ENCODE measurements at regions of chr17 and their contacts with region 1.

Region 1: GRCh38 chr17:48074315-48075081 is 26.3 kb downstream of the NFE2L1 start:
- DNase-seq: peak; percentile 59
- H3K4me3 Mint-ChIP-seq: no peak overlapping the region
- H3K27ac Mint-ChIP-seq: no peak overlapping the region
- H3K4me1 Mint-ChIP-seq: no peaks in the 10 kb centered on the region
- H3K27me3 Mint-ChIP-seq: no peaks in the 10 kb centered on the region

Region 2: GRCh38 chr17:47949136-47949759 is 125.2 kb before region 1 on chr17:
- intact Hi-C with region 1: loop called (anchors 1 kb)
- DNase-seq: peak; percentile 76
- H3K4me3 Mint-ChIP-seq: peak overlapping the region; percentile 70
- H3K27ac Mint-ChIP-seq: peak overlapping the region; percentile 76
- H3K4me1 Mint-ChIP-seq: peaks cover 41% of the 10 kb centered on the region
- H3K27me3 Mint-ChIP-seq: no peaks in the 10 kb centered on the region

Region 3: GRCh38 chr17:48037036-48037837 is 37.3 kb before region 1 on chr17 and contains the start of gene COPZ2:
- intact Hi-C with region 1: loop called (anchors 1 kb)
- DNase-seq: peak; percentile 56
- H3K4me3 Mint-ChIP-seq: peak within 1 kb of the TSS; percentile 84
- H3K27ac Mint-ChIP-seq: peak within 1 kb of the TSS; percentile 78
- H3K4me1 Mint-ChIP-seq: peaks cover 14% of the 10 kb centered on the region
- H3K27me3 Mint-ChIP-seq: peaks cover 35% of the 10 kb centered on the region
- total RNA-seq, gene COPZ2: 3.4 and 5.8 TPM in 2 replicates

Measured in activated T-helper 1 cell treated with anti-CD3 and anti-CD28 coated beads, Interleukin-12 subunit alpha, Interleukin-12 subunit beta, Interleukin-2, Interleukin-4 antibody, amounts not matched to agents 30 ng/mL and 10 ng/mL and 1 ng/mL, durations not matched to agents 14 hours and 24 hours and 36 hours (primary cell).